ENCODE measurements at regions of chr7 and their contacts with region 1.

Region 1: GRCh38 chr7:103447073-103447951 is 1.3 kb upstream of the SLC26A5 start:
- DNase-seq: peak; percentile 86
- H3K4me3 ChIP-seq: no peak overlapping the region; a peak in 1 of 4 replicates
- H3K27ac ChIP-seq: no peak overlapping the region
- H3K4me1 ChIP-seq: peaks cover 0 to 16% of the 10 kb centered on the region in 2 experiments; a peak in 2 of 4 replicates
- H3K27me3 ChIP-seq: peaks cover 41% of the 10 kb centered on the region
- CTCF ChIP-seq: peak; percentile 77
- EP300 ChIP-seq: no peak
- RAD21 ChIP-seq: peak; percentile 88

Region 2: GRCh38 chr7:103418241-103418640 is 29.1 kb before region 1 on chr7:
- CTCF ChIA-PET with region 1: interaction called, 11 read pairs
- POLR2A ChIA-PET with region 1: no interaction called
- DNase-seq: no peak
- H3K4me3 ChIP-seq: no peak overlapping the region
- H3K27ac ChIP-seq: no peak overlapping the region
- H3K4me1 ChIP-seq: no peaks in the 10 kb centered on the region
- H3K27me3 ChIP-seq: no peaks in the 10 kb centered on the region
- CTCF ChIP-seq: no peak
- EP300 ChIP-seq: no peak
- RAD21 ChIP-seq: no peak

Region 3: DNA sequence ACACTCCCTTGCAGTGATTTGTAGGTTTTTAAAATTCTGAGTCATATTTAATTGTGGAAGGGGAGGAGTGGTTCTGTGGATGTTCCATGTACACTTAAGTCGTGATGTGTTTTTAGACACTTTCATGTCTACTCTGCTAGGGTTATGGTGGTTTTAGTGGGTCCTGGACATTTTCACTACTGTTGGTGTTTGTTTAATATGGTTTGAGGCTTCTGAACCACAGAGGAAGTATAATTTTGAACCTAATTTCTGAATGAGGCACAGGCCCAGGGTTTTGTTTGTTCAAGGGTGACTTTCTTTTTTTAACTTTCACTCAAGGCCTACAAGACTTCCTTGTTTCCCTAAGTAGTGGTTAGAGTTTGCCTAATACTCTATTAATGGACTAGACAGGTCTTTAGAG is 14.6 kb before region 1 on chr7:
- CTCF ChIA-PET with region 1: interaction called, 11 read pairs
- POLR2A ChIA-PET with region 1: no interaction called
- DNase-seq: no peak
- H3K4me3 ChIP-seq: no peak overlapping the region
- H3K27ac ChIP-seq: no peak overlapping the region
- H3K4me1 ChIP-seq: no peaks in the 10 kb centered on the region; a peak in 1 of 4 replicates
- H3K27me3 ChIP-seq: no peaks in the 10 kb centered on the region
- CTCF ChIP-seq: no peak
- EP300 ChIP-seq: no peak
- RAD21 ChIP-seq: no peak

Region 4: DNA sequence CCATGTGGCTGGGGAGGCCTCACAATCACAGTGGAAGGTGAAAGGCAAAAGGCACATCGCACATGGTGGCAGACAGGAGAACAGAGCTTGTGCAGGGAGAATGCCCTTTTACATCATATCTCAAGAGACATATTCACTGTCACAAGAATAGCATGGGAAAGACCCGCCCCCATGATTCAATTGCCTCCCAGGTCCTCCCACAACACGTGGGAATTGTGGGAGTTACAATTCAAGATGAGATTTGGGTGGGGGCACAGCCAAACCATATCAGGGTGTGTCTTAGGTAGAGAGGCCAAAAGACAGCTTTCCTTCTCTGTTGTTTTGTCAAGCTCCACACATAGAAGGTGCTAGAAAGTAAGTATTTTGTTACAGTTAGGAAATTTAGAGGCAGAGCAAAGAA is 19.5 kb after region 1 on chr7:
- CTCF ChIA-PET with region 1: interaction called, 56 read pairs
- POLR2A ChIA-PET with region 1: no interaction called
- DNase-seq: no peak
- H3K4me3 ChIP-seq: no peak overlapping the region
- H3K27ac ChIP-seq: no peak overlapping the region
- H3K4me1 ChIP-seq: peaks cover 0 to 2% of the 10 kb centered on the region in 2 experiments; a peak in 1 of 4 replicates
- H3K27me3 ChIP-seq: peaks cover 11% of the 10 kb centered on the region; the same call in 1 of the 2 replicates
- CTCF ChIP-seq: no peak
- EP300 ChIP-seq: no peak
- RAD21 ChIP-seq: no peak

Region 5: GRCh38 chr7:103524042-103524907 is 77.0 kb after region 1 on chr7:
- CTCF ChIA-PET with region 1: interaction called, 40 read pairs
- POLR2A ChIA-PET with region 1: no interaction called
- DNase-seq: peak; percentile 72
- H3K4me3 ChIP-seq: no peak overlapping the region; a peak in 1 of 4 replicates
- H3K27ac ChIP-seq: no peak overlapping the region
- H3K4me1 ChIP-seq: peaks cover 0 to 5% of the 10 kb centered on the region in 2 experiments; a peak in 1 of 4 replicates
- H3K27me3 ChIP-seq: no peaks in the 10 kb centered on the region
- CTCF ChIP-seq: peak; percentile 77
- EP300 ChIP-seq: no peak
- RAD21 ChIP-seq: peak; percentile 99

Region 6: GRCh38 chr7:104149822-104150221 is 702.5 kb after region 1 on chr7:
- CTCF ChIA-PET with region 1: interaction called, 13 read pairs
- POLR2A ChIA-PET with region 1: no interaction called
- DNase-seq: no peak
- H3K4me3 ChIP-seq: no peak overlapping the region
- H3K27ac ChIP-seq: no peak overlapping the region
- H3K4me1 ChIP-seq: no peaks in the 10 kb centered on the region; a peak in 1 of 4 replicates
- H3K27me3 ChIP-seq: no peaks in the 10 kb centered on the region
- CTCF ChIP-seq: no peak
- EP300 ChIP-seq: no peak
- RAD21 ChIP-seq: no peak

Region 7: GRCh38 chr7:104156842-104157277 is 709.5 kb after region 1 on chr7:
- CTCF ChIA-PET with region 1: interaction called, 26 read pairs
- POLR2A ChIA-PET with region 1: no interaction called
- DNase-seq: peak; percentile 24
- H3K4me3 ChIP-seq: peak overlapping the region in 1 of 2 experiments; percentile 30; a peak in 1 of 4 replicates
- H3K27ac ChIP-seq: no peak overlapping the region; a peak in 1 of 4 replicates
- H3K4me1 ChIP-seq: no peaks in the 10 kb centered on the region; a peak in 1 of 4 replicates
- H3K27me3 ChIP-seq: no peaks in the 10 kb centered on the region
- CTCF ChIP-seq: peak; percentile 97
- EP300 ChIP-seq: no peak
- RAD21 ChIP-seq: peak; percentile 94

Measured in SK-N-SH (cell line).